CD4-positive, alpha-beta T cell (primary cell): ENCODE measurements at regions of chr3 and their contacts with region 1.

Region 1: DNA sequence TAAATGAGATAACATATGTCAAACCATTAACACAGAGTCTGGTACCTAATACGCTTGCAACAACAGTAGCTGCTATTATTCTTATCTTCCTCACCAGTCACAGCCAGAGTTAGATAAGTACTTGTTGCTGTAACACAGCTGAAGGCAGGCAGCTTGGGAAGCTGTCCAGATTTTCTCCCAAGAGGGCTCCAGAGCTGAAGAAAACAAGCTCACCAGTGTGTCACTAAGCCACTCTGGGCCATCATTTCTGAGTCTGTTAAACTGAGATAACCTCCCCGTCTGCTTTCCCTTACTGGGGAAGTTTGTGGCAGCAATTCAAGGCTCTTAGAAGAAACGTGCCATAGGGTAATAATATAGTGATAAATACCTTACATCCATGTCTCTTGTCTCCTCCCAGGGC is 226.3 kb downstream of the TAFA4 start:
- DNase-seq: no peak
- ATAC-seq: no peak
- H3K4me3 ChIP-seq: no peak overlapping the region
- H3K4me3 Mint-ChIP-seq: no peak overlapping the region
- H3K27ac ChIP-seq: no peak overlapping the region
- H3K27ac Mint-ChIP-seq: no peak overlapping the region
- H3K4me1 ChIP-seq: no peaks in the 10 kb centered on the region
- H3K4me1 Mint-ChIP-seq: no peaks in the 10 kb centered on the region
- H3K27me3 ChIP-seq: no peaks in the 10 kb centered on the region
- H3K27me3 Mint-ChIP-seq: peaks cover 30% of the 10 kb centered on the region
- CTCF ChIP-seq: no peak

Region 2: DNA sequence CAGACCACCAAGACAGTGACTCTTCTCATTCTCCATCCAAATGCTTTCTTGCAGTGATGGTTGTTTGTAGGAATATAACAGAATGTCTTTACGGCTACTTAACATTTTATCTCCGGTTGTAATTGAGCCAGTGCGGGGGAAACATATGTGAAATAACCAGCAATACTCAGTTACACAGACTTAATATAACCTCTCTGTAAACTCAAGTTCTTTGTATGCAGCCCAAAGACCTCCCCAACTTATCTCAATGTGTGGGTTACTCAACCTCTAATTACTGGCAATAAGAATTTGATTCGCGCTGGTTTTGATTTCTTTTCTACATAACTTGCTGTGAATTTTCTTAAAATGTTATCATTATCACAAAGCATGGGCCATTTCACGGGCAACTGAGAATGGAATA is 24.3 kb before region 1 on chr3:
- CTCF ChIA-PET with region 1: no interaction called
- POLR2A ChIA-PET with region 1: no interaction called
- intact Hi-C with region 1: loop called in 1 of 2 experiments (anchors 2 kb)
- DNase-seq: no peak
- ATAC-seq: no peak
- H3K4me3 ChIP-seq: no peak overlapping the region
- H3K4me3 Mint-ChIP-seq: no peak overlapping the region
- H3K27ac ChIP-seq: no peak overlapping the region
- H3K27ac Mint-ChIP-seq: no peak overlapping the region
- H3K4me1 ChIP-seq: no peaks in the 10 kb centered on the region
- H3K4me1 Mint-ChIP-seq: no peaks in the 10 kb centered on the region
- H3K27me3 ChIP-seq: no peaks in the 10 kb centered on the region
- H3K27me3 Mint-ChIP-seq: no peaks in the 10 kb centered on the region
- CTCF ChIP-seq: no peak

Region 3: GRCh38 chr3:69484507-69485393 is 778.7 kb after region 1 on chr3:
- CTCF ChIA-PET with region 1: no interaction called
- POLR2A ChIA-PET with region 1: no interaction called
- intact Hi-C with region 1: no loop called
- DNase-seq: no peak
- ATAC-seq: no peak
- H3K4me3 ChIP-seq: no peak overlapping the region
- H3K4me3 Mint-ChIP-seq: no peak overlapping the region
- H3K27ac ChIP-seq: no peak overlapping the region
- H3K27ac Mint-ChIP-seq: no peak overlapping the region
- H3K4me1 ChIP-seq: no peaks in the 10 kb centered on the region
- H3K4me1 Mint-ChIP-seq: no peaks in the 10 kb centered on the region
- H3K27me3 ChIP-seq: peaks cover 7 to 9% of the 10 kb centered on the region in 2 experiments
- H3K27me3 Mint-ChIP-seq: peaks cover 22% of the 10 kb centered on the region
- CTCF ChIP-seq: no peak